H1 (cell line): ENCODE measurements at regions of chr16 and their contacts with region 1.

Region 1: DNA sequence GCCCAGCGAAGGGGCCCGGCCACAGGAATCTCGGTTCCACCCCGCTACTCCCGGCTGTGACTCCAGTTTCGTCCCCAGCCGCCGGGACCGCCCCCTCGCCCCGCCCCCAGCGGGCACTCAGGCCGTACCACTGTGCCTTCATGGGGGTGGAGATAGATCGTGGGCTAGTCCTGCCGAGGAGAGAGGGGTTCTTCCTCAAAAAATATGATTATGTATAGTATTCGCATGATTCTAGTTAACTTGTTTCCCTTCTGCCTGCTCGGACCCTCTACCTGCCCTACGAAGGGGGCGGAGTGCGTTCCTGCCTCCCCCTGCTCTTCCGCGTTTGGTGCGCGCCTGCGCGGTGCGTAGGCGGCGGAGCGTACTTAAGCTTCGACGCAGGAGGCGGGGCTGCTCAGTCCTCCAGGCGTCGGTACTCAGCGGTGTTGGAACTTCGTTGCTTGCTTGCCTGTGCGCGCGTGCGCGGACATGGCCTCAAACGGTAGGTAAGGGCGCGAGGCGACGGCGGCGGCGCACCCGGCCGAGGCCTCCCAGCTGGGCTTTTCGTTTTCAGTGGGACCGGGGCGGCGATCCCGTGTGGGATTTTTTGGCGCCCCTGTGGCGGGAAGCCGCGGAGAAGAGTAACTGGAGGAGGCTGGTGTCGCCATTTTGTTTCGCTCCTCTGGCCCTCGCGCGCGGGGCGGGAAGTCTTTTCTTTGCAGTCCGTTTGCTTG is at the start of gene FUS:
- DNase-seq: peak in 1 of 2 experiments; percentile 94
- H3K4me3 ChIP-seq: peak within 1 kb of the TSS; percentile 69 to 96 (median 86)
- H3K27ac ChIP-seq: peak within 1 kb of the TSS; percentile 99
- H3K4me1 ChIP-seq: peaks cover 0 to 7% (median 2%) of the 10 kb centered on the region in 4 experiments; a peak in 5 of 7 replicates
- H3K27me3 ChIP-seq: no peaks in the 10 kb centered on the region
- CTCF ChIP-seq: no peak
- EP300 ChIP-seq: peak in 1 of 2 experiments; percentile 99; a peak in 2 of 3 replicates
- POLR2A ChIP-seq: peak; percentile 100
- RAD21 ChIP-seq: no peak
- total RNA-seq, gene FUS: 685 and 686 TPM in 2 replicates

Region 2: DNA sequence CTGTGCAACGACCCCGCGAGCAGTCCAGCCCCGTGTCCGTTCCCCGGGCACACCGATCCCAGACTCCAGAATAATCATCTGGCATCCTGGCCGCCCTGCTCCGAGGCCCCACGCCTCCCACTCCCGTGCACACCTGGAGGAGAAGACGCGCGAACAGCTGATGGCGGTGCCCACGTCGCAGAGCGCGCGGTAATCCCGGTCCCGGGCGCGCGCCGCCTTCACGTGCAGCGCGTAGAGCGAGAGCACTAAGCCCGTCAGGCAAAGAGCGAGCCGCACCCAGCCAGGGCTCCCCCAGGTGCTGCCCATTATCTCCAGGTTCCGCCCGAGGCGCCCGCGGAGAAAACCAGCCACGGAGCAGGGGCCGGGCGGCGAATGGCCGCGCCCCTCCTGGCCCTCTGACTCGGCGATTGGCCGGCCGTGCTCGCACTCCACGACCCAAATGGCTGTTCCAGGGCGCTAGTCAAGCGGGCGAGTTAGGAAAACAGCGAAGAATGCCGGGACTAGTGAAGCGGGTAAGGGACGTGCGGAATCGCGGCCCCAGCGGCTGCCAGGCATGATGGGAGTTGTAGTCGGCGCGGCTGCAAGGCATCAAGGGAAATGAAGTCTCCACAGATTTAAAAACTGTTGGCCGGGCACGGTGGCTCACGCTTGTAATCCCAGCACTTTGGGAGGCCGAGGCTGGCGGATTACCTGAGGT is 85.3 kb before region 1 on chr16 and contains the start of gene VKORC1:
- CTCF ChIA-PET with region 1: no interaction called
- POLR2A ChIA-PET with region 1: interaction called, 22 read pairs
- DNase-seq: peak; percentile 90 to 92
- H3K4me3 ChIP-seq: peak within 1 kb of the TSS; percentile 87 to 96 (median 92)
- H3K27ac ChIP-seq: peak within 1 kb of the TSS; percentile 16; the same call in 1 of the 2 replicates
- H3K4me1 ChIP-seq: peaks cover 0 to 9% (median 3%) of the 10 kb centered on the region in 4 experiments; a peak in 4 of 7 replicates
- H3K27me3 ChIP-seq: no peaks in the 10 kb centered on the region
- CTCF ChIP-seq: no peak
- EP300 ChIP-seq: no peak
- POLR2A ChIP-seq: peak in 1 of 2 experiments; percentile 36; a peak in 1 of 3 replicates
- RAD21 ChIP-seq: no peak
- total RNA-seq, gene VKORC1: 83.3 and 84.1 TPM in 2 replicates

Region 3: GRCh38 chr16:31128711-31129567 is 51.0 kb before region 1 on chr16:
- CTCF ChIA-PET with region 1: no interaction called
- POLR2A ChIA-PET with region 1: interaction called, 60 read pairs
- DNase-seq: no peak
- H3K4me3 ChIP-seq: no peak overlapping the region
- H3K27ac ChIP-seq: no peak overlapping the region
- H3K4me1 ChIP-seq: peaks cover 0 to 28% (median 24%) of the 10 kb centered on the region in 4 experiments; a peak in 6 of 7 replicates
- H3K27me3 ChIP-seq: no peaks in the 10 kb centered on the region
- CTCF ChIP-seq: no peak
- EP300 ChIP-seq: no peak
- POLR2A ChIP-seq: no peak
- RAD21 ChIP-seq: no peak

Region 4: GRCh38 chr16:31148281-31148771 is 31.6 kb before region 1 on chr16:
- CTCF ChIA-PET with region 1: no interaction called
- POLR2A ChIA-PET with region 1: interaction called, 85 read pairs
- DNase-seq: peak in 1 of 2 experiments; percentile 78
- H3K4me3 ChIP-seq: peak overlapping the region; percentile 31 to 59 (median 40)
- H3K27ac ChIP-seq: no peak overlapping the region
- H3K4me1 ChIP-seq: peaks cover 0 to 18% (median 4%) of the 10 kb centered on the region in 4 experiments; a peak in 5 of 7 replicates
- H3K27me3 ChIP-seq: peaks cover 0 to 15% (median 9%) of the 10 kb centered on the region in 4 experiments; a peak in 6 of 7 replicates
- CTCF ChIP-seq: no peak
- EP300 ChIP-seq: no peak
- POLR2A ChIP-seq: no peak
- RAD21 ChIP-seq: 0 out of 4 replicates have a peak, but pooled peaks of 1 of the 2 experiments have one; percentile 6

Region 5: DNA sequence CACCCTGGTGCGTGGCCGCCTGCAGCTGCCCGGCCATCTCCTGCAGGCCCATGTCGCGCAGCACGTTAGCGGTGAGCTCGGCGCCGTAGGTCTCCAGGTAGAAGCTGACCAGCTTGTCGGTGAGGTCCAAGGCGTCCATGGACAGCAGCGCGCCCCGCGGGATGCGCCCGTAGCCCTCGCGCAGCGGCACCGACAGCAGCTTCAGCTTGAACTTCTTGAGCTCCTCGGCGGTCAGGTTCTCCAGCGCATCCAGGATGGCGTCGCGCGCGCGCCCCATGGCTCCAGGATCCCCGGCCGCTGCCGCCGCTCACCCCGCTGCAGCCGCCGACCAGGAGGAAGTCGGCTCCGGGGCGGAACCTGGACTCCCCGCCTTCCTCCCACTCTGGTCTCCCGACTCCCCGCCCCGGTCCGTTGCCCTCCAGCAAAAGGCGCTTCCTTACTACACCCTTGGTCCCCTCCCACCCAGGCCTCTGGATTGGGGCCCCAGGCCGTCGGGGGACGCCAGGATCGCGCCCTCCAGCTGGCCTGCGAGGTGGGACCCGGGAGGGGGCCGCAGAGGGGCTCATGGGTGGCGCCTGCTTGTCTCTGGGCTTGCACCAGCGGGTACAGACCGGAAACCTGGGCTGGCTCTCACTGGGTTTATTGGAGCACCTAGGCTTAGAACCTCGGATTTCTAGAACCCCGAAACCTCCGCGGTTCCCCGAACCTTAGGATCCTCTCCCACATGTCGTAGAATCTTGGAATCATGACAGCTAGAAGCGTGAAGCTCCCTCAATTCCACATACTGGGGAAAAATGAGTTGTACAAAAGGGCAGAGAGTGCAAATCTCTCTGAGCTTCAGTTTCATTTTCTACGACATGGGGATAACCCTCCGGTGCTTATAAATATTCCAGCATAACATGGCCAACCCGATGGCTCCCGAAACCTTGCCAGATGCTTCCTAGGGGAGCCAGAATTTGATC is 22.8 kb after region 1 on chr16 and contains the start of gene PYCARD:
- CTCF ChIA-PET with region 1: interaction called, 3 read pairs
- POLR2A ChIA-PET with region 1: interaction called, 407 read pairs
- DNase-seq: peak in 1 of 2 experiments; percentile 79
- H3K4me3 ChIP-seq: peak within 1 kb of the TSS; percentile 61 to 74 (median 72)
- H3K27ac ChIP-seq: no peak within 1 kb of the TSS
- H3K4me1 ChIP-seq: peaks cover 0 to 7% (median 4%) of the 10 kb centered on the region in 4 experiments; a peak in 5 of 7 replicates
- H3K27me3 ChIP-seq: peaks cover 0 to 6% (median 3%) of the 10 kb centered on the region in 4 experiments; a peak in 3 of 7 replicates
- CTCF ChIP-seq: no peak
- EP300 ChIP-seq: no peak
- POLR2A ChIP-seq: peak; percentile 0 to 12; a peak in 2 of 3 replicates
- RAD21 ChIP-seq: no peak
- total RNA-seq, gene PYCARD: 29.9 and 32.2 TPM in 2 replicates

Region 6: GRCh38 chr16:31458844-31459721 is 279.2 kb after region 1 on chr16 and contains the start of gene ARMC5:
- CTCF ChIA-PET with region 1: no interaction called
- POLR2A ChIA-PET with region 1: interaction called, 14 read pairs
- DNase-seq: peak; percentile 93 to 95
- H3K4me3 ChIP-seq: peak within 1 kb of the TSS; percentile 70 to 85 (median 76)
- H3K27ac ChIP-seq: peak within 1 kb of the TSS; percentile 99
- H3K4me1 ChIP-seq: peaks cover 0 to 16% (median 6%) of the 10 kb centered on the region in 4 experiments; a peak in 5 of 7 replicates
- H3K27me3 ChIP-seq: no peaks in the 10 kb centered on the region
- CTCF ChIP-seq: peak; percentile 29 to 34 (median 32); a peak in 3 of 4 replicates
- EP300 ChIP-seq: no peak
- POLR2A ChIP-seq: peak; percentile 89 to 96
- RAD21 ChIP-seq: peak in 1 of 2 experiments; percentile 28; a peak in 2 of 4 replicates
- total RNA-seq, gene ARMC5: 8.7 and 8.9 TPM in 2 replicates